ENCODE measurements at regions of chr9 and their contacts with region 1.

Region 1: GRCh38 chr9:38079461-38080031 is 10.5 kb upstream of the SHB start:
- DNase-seq: peak; percentile 88

Region 2: DNA sequence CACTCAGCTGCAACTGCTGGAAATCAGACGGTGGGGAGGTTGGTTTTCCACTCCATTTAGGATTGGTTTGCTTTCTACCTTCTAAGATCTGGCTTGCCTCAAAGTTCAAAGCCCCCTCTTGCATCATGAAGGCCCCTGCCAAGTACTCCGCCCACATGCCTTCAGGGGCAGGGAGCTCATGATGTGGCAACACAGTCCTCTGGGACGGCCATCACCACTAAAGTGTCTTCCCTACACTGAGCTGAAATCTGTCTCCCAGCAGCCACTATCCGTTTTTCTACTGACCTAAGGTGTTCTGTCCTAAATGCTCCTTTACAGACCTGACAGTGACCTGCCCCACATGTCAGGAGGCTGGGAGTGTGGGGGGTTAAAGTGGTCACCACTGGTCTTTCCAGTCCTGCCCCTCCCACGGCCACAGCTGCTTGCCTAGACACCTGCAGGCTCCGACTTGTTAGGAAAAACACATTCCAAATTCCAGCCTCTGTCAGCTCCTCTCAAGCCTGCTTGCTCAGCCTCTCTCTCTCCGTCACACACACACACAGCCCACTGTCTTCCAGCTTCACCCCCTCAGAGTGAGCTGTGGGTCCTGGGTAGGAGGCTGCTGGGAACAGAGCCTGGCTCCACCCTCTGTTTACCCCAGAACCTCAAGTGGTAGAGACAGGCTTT is 55.4 kb before region 1 on chr9:
- intact Hi-C with region 1: no loop called
- DNase-seq: peak; percentile 92

Region 3: DNA sequence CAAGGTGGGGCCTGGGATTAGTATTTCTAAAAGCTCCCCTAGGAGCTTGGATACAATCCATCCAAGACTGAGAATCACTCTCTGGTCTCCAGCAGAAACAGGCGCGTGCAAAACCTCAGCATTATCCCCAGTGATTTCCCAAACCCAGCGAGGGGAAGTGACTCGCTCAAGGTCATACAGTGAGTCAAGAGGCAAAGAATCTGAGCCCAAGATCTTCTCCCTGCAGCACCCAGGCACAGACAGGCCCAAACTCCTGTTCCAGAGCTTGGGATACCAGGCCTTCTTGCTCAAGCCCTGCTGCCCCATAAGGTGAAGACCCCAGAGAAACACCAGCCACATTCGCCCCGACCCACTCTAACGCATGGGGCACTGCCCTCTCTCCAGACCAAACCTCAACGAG is 43.7 kb before region 1 on chr9:
- intact Hi-C with region 1: loop called in 1 of 2 experiments (anchors 2 kb)
- DNase-seq: no peak

Region 4: DNA sequence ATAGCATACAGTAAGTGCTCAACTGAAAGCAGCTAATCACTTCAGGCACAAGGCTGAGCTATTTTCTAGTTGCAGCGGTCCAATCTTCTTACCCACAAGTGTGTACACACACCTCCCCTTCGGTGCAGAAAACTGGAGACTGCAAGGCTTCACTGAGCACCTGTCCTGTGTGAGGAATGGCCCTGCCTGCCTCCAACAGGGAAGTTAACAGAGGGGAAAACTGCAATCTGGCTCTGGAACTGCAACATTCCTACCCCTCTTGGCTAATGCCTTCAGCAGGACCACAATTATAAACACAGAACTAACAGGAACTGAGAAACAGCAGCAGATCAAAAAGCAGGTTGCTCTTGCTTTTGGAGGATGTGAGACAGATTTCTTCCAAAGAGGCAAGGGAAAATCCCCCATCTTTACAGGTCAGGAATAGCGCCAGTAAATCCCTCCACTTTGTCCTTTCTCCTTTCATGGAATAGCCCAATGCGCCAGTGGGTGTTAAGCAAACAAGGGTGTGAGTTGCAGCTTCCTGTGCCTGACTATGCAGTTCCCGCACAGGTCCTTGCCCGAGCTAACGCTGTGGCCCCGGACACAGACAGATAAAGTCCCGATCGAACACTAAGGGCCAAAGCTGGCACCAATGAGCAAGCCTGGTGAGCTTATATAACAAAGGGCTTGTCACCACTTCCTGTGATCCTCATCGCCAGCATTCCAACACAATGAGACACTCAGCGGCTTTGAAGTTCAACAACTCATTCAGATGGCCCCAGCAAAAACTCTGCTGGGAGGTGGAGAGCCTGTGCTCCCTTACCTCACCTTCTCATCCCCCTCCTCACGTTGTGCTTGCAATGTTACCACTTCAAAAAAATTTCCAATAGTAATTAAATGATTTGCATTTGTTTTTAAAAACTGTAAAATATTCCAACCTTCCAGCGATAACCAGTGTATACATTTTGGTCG is 32.0 kb before region 1 on chr9:
- intact Hi-C with region 1: no loop called
- DNase-seq: no peak

Measured in posterior vena cava (tissue), 2 donors.